Vagina (tissue), 2 donors: ENCODE measurements at regions of chr20 and their contacts with region 1.

Region 1: GRCh38 chr20:62386383-62387218 is at the start of gene RPS21:
- DNase-seq: no peak
- H3K4me3 ChIP-seq: peak within 1 kb of the TSS; percentile 87 to 100
- H3K27ac ChIP-seq: peak within 1 kb of the TSS; percentile 92
- H3K4me1 ChIP-seq: peaks cover 40% of the 10 kb centered on the region
- H3K27me3 ChIP-seq: no peaks in the 10 kb centered on the region
- CTCF ChIP-seq: peak in 1 of 3 experiments; percentile 12
- POLR2A ChIP-seq: peak in 1 of 2 donors; percentile 52
- total RNA-seq, gene RPS21: 1,935 TPM

Region 2: GRCh38 chr20:62025832-62026563 is 360.6 kb before region 1 on chr20:
- intact Hi-C with region 1: no loop called
- DNase-seq: no peak
- H3K4me3 ChIP-seq: no peak overlapping the region
- H3K27ac ChIP-seq: no peak overlapping the region
- H3K4me1 ChIP-seq: peaks cover 36% of the 10 kb centered on the region
- H3K27me3 ChIP-seq: no peaks in the 10 kb centered on the region
- CTCF ChIP-seq: no peak
- POLR2A ChIP-seq: no peak

Region 3: DNA sequence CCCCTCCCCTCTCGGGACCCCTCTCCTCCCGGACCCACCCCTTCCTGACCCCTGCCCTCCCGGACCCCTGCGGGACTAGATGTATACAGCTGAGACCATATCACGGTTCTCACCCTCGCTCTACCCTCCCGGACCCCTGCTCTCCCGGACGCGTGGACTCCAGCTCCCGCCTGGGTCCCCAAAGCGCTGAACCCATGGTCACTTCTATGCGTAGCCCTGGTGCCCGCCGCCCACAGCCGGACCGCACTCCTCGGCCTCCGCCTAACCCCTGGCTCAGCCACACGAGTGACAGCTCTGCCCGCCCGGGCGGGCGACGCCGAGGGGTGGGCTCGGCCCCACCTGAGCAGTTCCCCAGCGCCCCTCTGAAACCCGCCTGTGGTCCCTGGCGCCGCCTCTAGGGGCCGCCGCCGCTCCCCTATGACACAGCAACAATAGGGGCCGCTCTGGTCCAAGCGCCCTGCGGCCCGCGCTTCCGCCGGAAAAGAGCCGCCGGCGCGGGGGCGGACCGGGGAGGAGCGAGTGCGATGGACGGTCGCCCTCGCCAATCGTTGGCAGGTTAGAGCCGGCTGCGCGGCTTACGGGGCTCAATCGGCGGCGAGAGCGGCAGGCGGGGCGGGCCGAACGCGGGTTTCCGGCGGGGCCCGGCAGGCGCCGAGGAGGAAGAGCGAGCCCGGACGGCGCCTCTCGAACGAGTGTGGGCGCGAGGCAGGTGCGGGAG is 84.1 kb before region 1 on chr20 and contains the start of gene ADRM1:
- intact Hi-C with region 1: loop called (anchors 5 kb)
- DNase-seq: peak in 1 of 2 donors; percentile 95
- H3K4me3 ChIP-seq: peak within 1 kb of the TSS; percentile 85 to 98
- H3K27ac ChIP-seq: peak within 1 kb of the TSS; percentile 97
- H3K4me1 ChIP-seq: peaks cover 39% of the 10 kb centered on the region
- H3K27me3 ChIP-seq: no peaks in the 10 kb centered on the region
- CTCF ChIP-seq: peak; percentile 93 to 96 (median 94)
- POLR2A ChIP-seq: no peak
- total RNA-seq, gene ADRM1: 110 TPM